MCF 10A (cell line): ENCODE measurements at regions of chr1 and their contacts with region 1.

Region 1: GRCh38 chr1:220046052-220046930 is at the start of gene EPRS1:
- DNase-seq: peak; percentile 100
- H3K4me3 Mint-ChIP-seq: peak within 1 kb of the TSS; percentile 100
- H3K27ac Mint-ChIP-seq: peak within 1 kb of the TSS; percentile 99
- H3K4me1 Mint-ChIP-seq: peaks cover 21% of the 10 kb centered on the region
- H3K27me3 Mint-ChIP-seq: no peaks in the 10 kb centered on the region
- CTCF ChIP-seq: peak; percentile 80
- total RNA-seq, gene EPRS1: 476 and 612 TPM in 2 replicates

Region 2: GRCh38 chr1:220007438-220007837 is 38.9 kb before region 1 on chr1:
- CTCF ChIA-PET with region 1: interaction called, 6 read pairs
- POLR2A ChIA-PET with region 1: no interaction called
- intact Hi-C with region 1: loop called (anchors 5 kb)
- DNase-seq: no peak
- H3K4me3 Mint-ChIP-seq: no peak overlapping the region
- H3K27ac Mint-ChIP-seq: peak overlapping the region; percentile 3
- H3K4me1 Mint-ChIP-seq: peaks cover 7% of the 10 kb centered on the region
- H3K27me3 Mint-ChIP-seq: no peaks in the 10 kb centered on the region
- CTCF ChIP-seq: no peak

Region 3: DNA sequence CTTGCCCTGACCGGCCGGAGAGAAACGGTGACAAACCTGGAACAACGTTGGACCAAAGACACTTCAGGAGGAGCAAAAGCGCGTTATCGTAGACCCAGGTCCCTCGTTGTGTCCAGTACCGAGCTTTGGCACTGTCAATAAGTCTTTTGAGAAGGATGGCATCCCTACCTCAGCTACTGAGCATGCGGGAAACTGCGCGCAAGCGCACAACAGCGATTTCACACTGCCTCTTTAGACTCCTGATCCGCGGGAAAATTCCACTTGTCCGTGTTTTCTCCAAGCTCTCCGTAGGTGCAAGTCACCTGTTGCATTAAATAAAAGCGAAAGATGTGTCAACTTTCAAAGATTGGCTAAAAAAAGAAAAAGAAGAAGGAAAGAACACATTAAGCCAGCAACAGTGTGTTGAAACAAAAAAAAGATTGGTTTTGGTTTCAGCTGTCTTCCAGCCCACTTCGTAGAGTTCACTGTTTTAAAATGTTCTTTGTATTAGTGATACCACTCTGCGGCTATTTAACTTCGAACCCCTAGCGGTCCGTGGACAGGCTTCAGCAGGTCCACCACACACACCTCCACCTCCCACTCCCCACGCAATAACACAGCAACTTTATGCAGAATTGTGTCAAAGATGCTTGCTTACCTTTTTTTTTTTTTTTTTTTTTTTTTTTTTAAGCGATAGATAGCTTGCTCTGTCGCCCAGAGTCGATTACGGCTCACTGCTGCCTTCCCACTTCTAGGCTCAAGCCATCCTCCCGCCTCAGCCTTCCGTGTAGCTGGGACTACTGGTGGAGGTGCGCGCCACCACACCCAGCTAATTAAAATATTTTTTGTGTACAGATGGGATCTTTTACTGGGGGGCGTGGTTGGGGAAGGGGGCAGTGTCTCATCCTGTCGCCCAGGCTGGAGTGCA is 43.6 kb after region 1 on chr1 and contains the start of gene BPNT1:
- CTCF ChIA-PET with region 1: interaction called, 4 read pairs
- POLR2A ChIA-PET with region 1: interaction called, 17 read pairs
- intact Hi-C with region 1: loop called (anchors 1 kb)
- DNase-seq: peak; percentile 100
- H3K4me3 Mint-ChIP-seq: peak within 1 kb of the TSS; percentile 92
- H3K27ac Mint-ChIP-seq: peak within 1 kb of the TSS; percentile 76
- H3K4me1 Mint-ChIP-seq: peaks cover 9% of the 10 kb centered on the region
- H3K27me3 Mint-ChIP-seq: no peaks in the 10 kb centered on the region
- CTCF ChIP-seq: no peak
- total RNA-seq, gene BPNT1: 39.2 and 44.6 TPM in 2 replicates

Region 4: GRCh38 chr1:220198186-220199005 is 152.1 kb after region 1 on chr1:
- CTCF ChIA-PET with region 1: no interaction called
- POLR2A ChIA-PET with region 1: no interaction called
- intact Hi-C with region 1: no loop called
- DNase-seq: no peak
- H3K4me3 Mint-ChIP-seq: no peak overlapping the region
- H3K27ac Mint-ChIP-seq: no peak overlapping the region
- H3K4me1 Mint-ChIP-seq: no peaks in the 10 kb centered on the region
- H3K27me3 Mint-ChIP-seq: no peaks in the 10 kb centered on the region
- CTCF ChIP-seq: no peak